Colonic mucosa (tissue), 4 donors: ENCODE measurements at regions of chr2 and their contacts with region 1.

Region 1: DNA sequence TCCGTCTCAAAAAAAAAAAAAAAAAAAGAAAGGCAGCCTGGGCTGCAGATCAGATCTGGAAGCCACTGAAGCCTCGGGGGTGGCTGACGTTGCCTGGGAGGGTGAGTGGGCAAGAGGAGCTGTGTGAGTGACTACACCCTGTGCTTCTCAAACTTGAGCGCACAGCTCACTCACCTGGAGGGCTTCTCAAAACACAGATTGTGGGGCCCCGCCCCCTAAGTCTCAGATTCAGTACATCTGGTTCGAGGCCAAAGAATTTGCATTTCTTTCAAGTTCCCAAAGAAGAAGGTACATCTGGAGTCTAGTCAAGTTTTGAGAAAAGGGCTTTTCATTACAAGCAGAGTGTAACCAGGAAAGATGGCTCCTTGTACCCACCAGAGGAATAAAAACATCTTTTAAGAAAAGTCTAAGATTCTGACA is 97.7 kb upstream of the CAB39 start:
- DNase-seq: no peak
- H3K4me3 ChIP-seq: no peak overlapping the region
- H3K27ac ChIP-seq: no peak overlapping the region
- H3K4me1 ChIP-seq: no peaks in the 10 kb centered on the region
- H3K27me3 ChIP-seq: no peaks in the 10 kb centered on the region
- CTCF ChIP-seq: no peak

Region 2: DNA sequence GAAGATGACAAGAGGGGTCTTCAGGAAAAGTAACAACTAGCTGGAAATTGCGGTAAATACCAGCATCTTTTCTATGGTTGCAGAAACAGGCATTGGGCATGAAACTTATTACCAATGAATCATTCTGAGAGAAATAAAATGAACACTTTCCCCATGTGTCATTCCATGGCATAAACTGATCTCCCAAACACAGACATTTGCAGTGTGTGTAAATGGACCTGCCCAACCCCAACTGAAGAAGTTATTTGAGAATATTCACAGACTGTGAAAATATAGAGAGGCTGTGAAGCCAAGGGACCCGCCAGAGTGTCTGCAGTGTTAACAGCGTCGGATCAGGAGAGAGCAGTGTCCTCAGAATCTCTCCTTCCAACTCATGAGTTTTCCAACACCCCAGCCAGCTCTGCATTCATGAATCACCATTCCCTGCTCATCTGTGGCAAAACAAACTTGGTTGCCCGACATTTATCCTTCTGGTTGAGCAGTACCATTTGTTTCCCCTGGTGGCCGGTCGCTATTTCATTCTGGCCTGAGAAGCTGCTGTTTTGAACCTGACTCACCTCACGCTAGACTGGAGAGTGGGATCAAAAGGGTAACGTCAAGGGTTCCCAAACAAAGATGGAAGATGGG is 1582.2 kb before region 1 on chr2:
- intact Hi-C with region 1: no loop called
- DNase-seq: no peak
- H3K4me3 ChIP-seq: no peak overlapping the region
- H3K27ac ChIP-seq: no peak overlapping the region
- H3K4me1 ChIP-seq: no peaks in the 10 kb centered on the region
- H3K27me3 ChIP-seq: no peaks in the 10 kb centered on the region
- CTCF ChIP-seq: no peak

Region 3: DNA sequence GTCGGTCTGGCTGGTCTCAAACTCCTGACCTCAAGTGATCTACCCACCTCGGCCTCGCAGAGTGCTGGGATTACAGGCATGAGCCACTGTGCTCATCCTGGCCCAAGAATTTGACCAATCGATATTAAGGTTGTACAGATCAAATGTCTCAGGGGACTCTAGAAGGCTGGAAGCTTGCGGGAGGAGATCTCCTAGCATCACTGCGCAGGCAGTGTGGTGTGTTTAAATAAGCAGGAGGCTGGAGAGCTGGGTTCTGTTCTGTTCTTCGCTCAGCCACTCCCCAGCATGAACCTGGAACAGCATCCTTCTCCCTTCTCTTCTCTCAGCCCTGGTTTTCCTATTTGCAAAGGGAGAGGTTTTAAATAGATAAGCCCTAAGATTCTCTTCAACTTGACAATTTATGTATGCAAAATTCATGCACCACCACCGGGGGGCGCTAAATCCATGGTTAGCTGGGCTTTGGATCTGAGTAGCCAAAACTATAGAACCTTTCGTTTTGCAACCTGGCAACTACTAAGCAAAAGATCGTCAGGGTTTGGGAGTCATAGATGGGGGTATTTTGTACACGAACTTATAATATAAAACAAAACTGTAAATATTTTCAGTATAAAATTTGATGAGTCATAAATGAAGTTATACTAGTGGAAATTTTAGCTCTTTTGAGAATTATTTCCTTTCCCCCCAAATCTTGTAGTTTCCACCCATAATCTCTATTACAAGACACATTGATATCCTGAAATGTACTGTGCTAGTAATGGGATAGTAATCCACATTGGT is 606.8 kb before region 1 on chr2:
- intact Hi-C with region 1: loop called (anchors 2 kb)
- DNase-seq: peak; percentile 84
- H3K4me3 ChIP-seq: no peak overlapping the region
- H3K27ac ChIP-seq: no peak overlapping the region
- H3K4me1 ChIP-seq: no peaks in the 10 kb centered on the region
- H3K27me3 ChIP-seq: no peaks in the 10 kb centered on the region
- CTCF ChIP-seq: peak; percentile 82

Region 4: DNA sequence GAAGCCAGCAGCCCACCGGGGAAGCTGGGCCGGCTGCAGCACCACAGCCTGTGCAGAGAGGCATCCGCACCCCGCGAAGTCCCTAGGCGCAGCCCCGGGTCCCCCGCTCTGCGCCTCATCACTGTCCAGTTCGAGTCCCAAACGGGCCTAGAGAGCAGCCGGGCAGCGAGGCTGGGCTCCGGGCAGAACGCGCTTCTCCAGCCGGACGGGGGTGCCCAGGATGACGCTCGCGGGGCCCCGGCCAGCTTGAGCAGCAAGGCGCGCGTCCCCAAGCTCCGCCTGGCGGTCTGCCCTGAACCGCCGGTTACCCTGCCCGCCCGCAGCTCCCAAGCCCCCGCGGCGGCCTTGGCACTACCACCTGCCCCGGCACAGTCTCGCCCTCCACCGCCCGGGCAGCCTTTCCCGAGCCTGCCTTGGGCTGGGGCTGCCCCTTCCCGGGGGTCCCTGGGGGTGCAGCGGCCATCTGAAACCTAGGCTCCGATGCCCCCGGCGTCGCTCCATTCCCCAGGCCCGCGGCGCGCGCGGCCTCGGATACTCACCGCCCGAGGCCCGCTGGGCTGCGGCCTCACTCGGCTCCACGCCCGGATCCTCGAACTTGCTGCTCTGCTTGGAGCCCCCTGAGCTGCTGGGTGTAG is 546.8 kb before region 1 on chr2:
- intact Hi-C with region 1: loop called (anchors 5 kb)
- DNase-seq: peak; percentile 56
- H3K4me3 ChIP-seq: peak overlapping the region; percentile 65
- H3K27ac ChIP-seq: no peak overlapping the region
- H3K4me1 ChIP-seq: no peaks in the 10 kb centered on the region
- H3K27me3 ChIP-seq: no peaks in the 10 kb centered on the region
- CTCF ChIP-seq: no peak

Region 5: GRCh38 chr2:230160112-230160660 is 454.7 kb before region 1 on chr2:
- intact Hi-C with region 1: loop called (anchors 5 kb)
- DNase-seq: peak; percentile 53
- H3K4me3 ChIP-seq: no peak overlapping the region
- H3K27ac ChIP-seq: no peak overlapping the region
- H3K4me1 ChIP-seq: no peaks in the 10 kb centered on the region
- H3K27me3 ChIP-seq: no peaks in the 10 kb centered on the region
- CTCF ChIP-seq: peak; percentile 85

Region 6: GRCh38 chr2:230798769-230799399 is 184.0 kb after region 1 on chr2:
- intact Hi-C with region 1: loop called (anchors 5 kb)
- DNase-seq: peak; percentile 57
- H3K4me3 ChIP-seq: no peak overlapping the region
- H3K27ac ChIP-seq: no peak overlapping the region
- H3K4me1 ChIP-seq: peaks cover 13% of the 10 kb centered on the region
- H3K27me3 ChIP-seq: no peaks in the 10 kb centered on the region
- CTCF ChIP-seq: peak; percentile 58